ENCODE measurements at regions of chr6 and their contacts with region 1.

Region 1: GRCh38 chr6:71383901-71384489 is 95.4 kb downstream of the OGFRL1 start:
- DNase-seq: peak; percentile 38
- H3K4me3 ChIP-seq: no peak overlapping the region
- H3K27ac ChIP-seq: no peak overlapping the region
- H3K27me3 ChIP-seq: no peaks in the 10 kb centered on the region
- CTCF ChIP-seq: peak; percentile 34

Region 2: DNA sequence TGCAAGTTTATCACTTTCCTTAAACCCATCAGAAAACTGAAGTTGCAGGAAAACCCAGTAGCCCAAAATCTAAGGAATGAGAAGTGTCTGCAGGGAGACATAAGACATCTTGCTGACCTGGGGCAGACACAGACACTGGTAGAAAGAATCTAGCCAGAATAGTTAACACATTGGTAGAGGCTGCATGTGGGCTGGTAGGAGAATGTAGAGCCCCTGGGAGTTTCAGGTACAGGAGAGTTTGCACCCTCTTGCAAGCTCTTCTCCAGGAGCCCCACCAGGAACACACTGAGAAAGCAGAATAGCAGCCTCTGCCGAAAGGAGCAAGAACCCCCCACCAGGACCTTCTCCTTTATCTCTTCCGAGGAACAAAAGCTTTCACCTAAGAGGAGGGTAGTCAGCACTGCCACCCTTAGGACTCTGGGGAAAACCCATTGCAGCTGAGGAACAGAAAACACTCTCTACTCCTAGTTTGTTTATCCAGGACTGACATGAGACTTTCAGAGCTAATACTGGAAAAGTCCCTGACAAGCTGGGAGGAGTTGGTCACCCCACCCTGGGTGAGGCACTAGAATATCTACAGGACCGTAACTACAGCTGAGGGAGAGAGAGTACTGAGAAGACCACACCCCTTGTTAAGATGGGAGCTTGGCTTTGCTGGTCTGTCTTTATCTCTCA is 105.9 kb before region 1 on chr6:
- in situ Hi-C with region 1: no loop called
- DNase-seq: no peak
- H3K4me3 ChIP-seq: no peak overlapping the region
- H3K27ac ChIP-seq: no peak overlapping the region
- H3K27me3 ChIP-seq: no peaks in the 10 kb centered on the region
- CTCF ChIP-seq: no peak

Region 3: GRCh38 chr6:71496018-71496721 is 112.2 kb after region 1 on chr6:
- in situ Hi-C with region 1: loop called (anchors 25 kb)
- DNase-seq: peak; percentile 30
- H3K4me3 ChIP-seq: peak overlapping the region; percentile 31
- H3K27ac ChIP-seq: peak overlapping the region; percentile 50
- H3K27me3 ChIP-seq: no peaks in the 10 kb centered on the region
- CTCF ChIP-seq: no peak

Measured in brain microvascular endothelial cell (primary cell).